PC-9 (cell line): ENCODE measurements at regions of chr11 and their contacts with region 1.

Region 1: GRCh38 chr11:75328426-75329277 is 22.8 kb downstream of the ARRB1 start:
- DNase-seq: peak; percentile 83 to 92
- H3K4me3 ChIP-seq: no peak overlapping the region
- H3K27ac ChIP-seq: 0 out of 2 replicates have a peak overlapping the region, but pooled peaks have one; percentile 20
- H3K4me1 ChIP-seq: peaks cover 31% of the 10 kb centered on the region
- H3K27me3 ChIP-seq: no peaks in the 10 kb centered on the region
- CTCF ChIP-seq: peak; percentile 85

Region 2: DNA sequence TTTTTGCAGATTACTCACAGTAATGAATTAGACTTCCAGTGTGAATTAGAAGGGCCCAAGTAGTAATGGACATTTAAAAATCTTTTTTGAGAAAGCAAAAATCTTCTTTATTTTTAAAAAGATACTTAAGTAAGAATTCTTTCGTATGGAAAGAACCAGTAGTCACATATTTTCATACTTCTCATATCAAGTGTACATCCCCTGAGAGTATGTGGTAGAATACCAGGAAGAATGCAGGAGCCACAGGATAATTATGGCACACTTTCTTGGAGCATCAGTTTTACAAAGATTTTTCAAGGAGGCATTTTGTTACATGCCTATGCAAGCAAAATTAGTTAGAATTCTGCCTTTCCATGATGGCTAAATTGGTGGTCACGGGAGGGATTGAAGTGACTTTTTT is 708.1 kb before region 1 on chr11:
- CTCF ChIA-PET with region 1: no interaction called
- POLR2A ChIA-PET with region 1: no interaction called
- intact Hi-C with region 1: no loop called
- DNase-seq: no peak
- H3K4me3 ChIP-seq: no peak overlapping the region
- H3K27ac ChIP-seq: no peak overlapping the region
- H3K4me1 ChIP-seq: no peaks in the 10 kb centered on the region
- H3K27me3 ChIP-seq: no peaks in the 10 kb centered on the region
- CTCF ChIP-seq: no peak

Region 3: GRCh38 chr11:75280227-75280701 is 48.4 kb before region 1 on chr11:
- CTCF ChIA-PET with region 1: interaction called, 3 read pairs
- POLR2A ChIA-PET with region 1: no interaction called
- intact Hi-C with region 1: loop called (anchors 1 kb)
- DNase-seq: peak; percentile 48 to 73
- H3K4me3 ChIP-seq: no peak overlapping the region
- H3K27ac ChIP-seq: no peak overlapping the region
- H3K4me1 ChIP-seq: no peaks in the 10 kb centered on the region
- H3K27me3 ChIP-seq: no peaks in the 10 kb centered on the region
- CTCF ChIP-seq: peak; percentile 98

Region 4: DNA sequence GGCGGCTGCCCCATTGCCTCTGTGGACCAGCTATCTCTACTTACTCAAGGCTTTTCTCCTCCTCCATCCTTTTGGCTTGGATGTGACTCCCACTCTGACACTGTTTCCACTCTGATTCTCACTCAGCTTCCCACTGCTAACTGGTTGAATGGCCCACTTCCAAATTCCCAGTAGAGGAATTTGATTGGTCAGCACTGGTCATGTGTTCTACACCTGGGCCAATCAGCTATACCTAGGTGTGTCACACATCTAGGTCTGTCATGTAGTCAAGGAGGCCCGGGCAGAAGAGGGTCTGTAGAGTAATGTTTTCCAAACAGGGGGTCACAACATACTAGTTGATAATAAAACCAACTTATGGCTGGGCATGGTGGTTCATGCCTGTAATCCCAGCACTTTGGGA is 34.7 kb before region 1 on chr11:
- CTCF ChIA-PET with region 1: no interaction called
- POLR2A ChIA-PET with region 1: no interaction called
- intact Hi-C with region 1: no loop called
- DNase-seq: no peak
- H3K4me3 ChIP-seq: no peak overlapping the region
- H3K27ac ChIP-seq: no peak overlapping the region
- H3K4me1 ChIP-seq: no peaks in the 10 kb centered on the region; the same call in 1 of the 2 replicates
- H3K27me3 ChIP-seq: no peaks in the 10 kb centered on the region
- CTCF ChIP-seq: no peak

Region 5: GRCh38 chr11:75342903-75343870 is 14.5 kb after region 1 on chr11:
- CTCF ChIA-PET with region 1: interaction called, 15 read pairs
- POLR2A ChIA-PET with region 1: interaction called, 3 read pairs
- intact Hi-C with region 1: no loop called
- DNase-seq: peak in 1 of 2 experiments; percentile 83
- H3K4me3 ChIP-seq: no peak overlapping the region
- H3K27ac ChIP-seq: no peak overlapping the region
- H3K4me1 ChIP-seq: peaks cover 93% of the 10 kb centered on the region
- H3K27me3 ChIP-seq: no peaks in the 10 kb centered on the region
- CTCF ChIP-seq: no peak

Region 6: DNA sequence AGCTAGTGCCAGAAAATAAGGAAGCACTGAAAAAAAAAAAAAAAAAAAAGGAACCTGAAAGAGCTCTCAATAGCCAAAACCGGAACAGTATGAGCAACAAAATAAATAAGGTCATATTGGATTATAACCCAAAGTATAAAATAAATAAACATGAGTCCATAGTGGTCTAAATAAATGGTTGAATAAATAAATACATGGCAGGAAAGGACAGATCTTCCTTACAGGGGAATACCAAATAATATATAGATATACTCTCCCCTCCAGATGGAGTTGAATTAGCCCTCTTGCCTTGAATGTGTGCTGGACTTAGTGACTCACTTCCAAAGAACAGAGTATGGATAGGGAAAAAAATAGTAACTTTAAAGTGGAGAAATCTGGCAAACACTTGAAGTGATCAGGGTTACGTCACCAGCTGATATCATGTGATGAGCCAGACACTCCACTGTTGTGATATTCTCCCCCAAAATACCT is 37.1 kb after region 1 on chr11:
- CTCF ChIA-PET with region 1: no interaction called
- POLR2A ChIA-PET with region 1: interaction called, 22 read pairs
- intact Hi-C with region 1: no loop called
- DNase-seq: no peak
- H3K4me3 ChIP-seq: no peak overlapping the region
- H3K27ac ChIP-seq: no peak overlapping the region
- H3K4me1 ChIP-seq: peaks cover 32% of the 10 kb centered on the region
- H3K27me3 ChIP-seq: no peaks in the 10 kb centered on the region
- CTCF ChIP-seq: no peak

Region 7: GRCh38 chr11:75371941-75372789 is 43.5 kb after region 1 on chr11:
- CTCF ChIA-PET with region 1: no interaction called
- POLR2A ChIA-PET with region 1: interaction called, 32 read pairs
- intact Hi-C with region 1: no loop called
- DNase-seq: peak; percentile 32 to 95
- H3K4me3 ChIP-seq: no peak overlapping the region
- H3K27ac ChIP-seq: peak overlapping the region; percentile 32
- H3K4me1 ChIP-seq: peaks cover 36% of the 10 kb centered on the region
- H3K27me3 ChIP-seq: no peaks in the 10 kb centered on the region
- CTCF ChIP-seq: no peak

Region 8: DNA sequence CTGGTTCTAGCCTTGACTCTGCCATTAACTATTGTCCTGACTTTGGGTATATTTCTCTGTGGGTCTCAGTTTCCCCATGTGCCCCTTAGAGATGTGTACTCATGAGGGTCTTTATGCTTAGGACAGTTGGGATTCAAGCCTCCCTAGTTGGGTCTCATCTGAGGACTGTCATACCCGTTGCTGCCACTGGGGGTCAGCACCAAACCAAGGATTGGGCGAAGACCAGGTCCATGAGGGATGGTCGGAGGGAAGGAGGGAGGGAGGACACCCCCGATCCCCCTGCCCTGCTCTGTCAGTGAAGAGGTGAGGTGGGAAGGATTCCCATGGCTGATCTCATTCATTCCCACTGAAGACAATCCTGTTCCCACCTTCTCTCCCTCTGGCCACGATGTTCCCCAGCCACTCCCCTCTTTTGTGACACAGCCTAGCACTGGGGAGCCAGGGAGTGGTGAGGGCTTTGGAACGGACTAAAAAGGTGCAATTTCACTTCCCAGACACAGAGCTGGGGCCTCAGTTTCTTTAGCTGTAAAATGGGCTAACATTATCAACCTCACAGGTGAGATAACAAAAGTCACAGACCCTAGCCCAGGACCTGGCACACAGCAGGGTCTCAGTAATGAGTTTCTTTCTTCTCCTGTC is 116.8 kb after region 1 on chr11:
- CTCF ChIA-PET with region 1: no interaction called
- POLR2A ChIA-PET with region 1: no interaction called
- intact Hi-C with region 1: loop called (anchors 5 kb)
- DNase-seq: peak in 1 of 2 experiments; percentile 74
- H3K4me3 ChIP-seq: no peak overlapping the region
- H3K27ac ChIP-seq: no peak overlapping the region
- H3K4me1 ChIP-seq: no peaks in the 10 kb centered on the region
- H3K27me3 ChIP-seq: no peaks in the 10 kb centered on the region; the same call in 1 of the 2 replicates
- CTCF ChIP-seq: peak; percentile 100

Region 9: GRCh38 chr11:75532200-75533048 is 203.8 kb after region 1 on chr11:
- CTCF ChIA-PET with region 1: no interaction called
- POLR2A ChIA-PET with region 1: no interaction called
- intact Hi-C with region 1: loop called (anchors 1 kb)
- DNase-seq: peak; percentile 72 to 76
- H3K4me3 ChIP-seq: no peak overlapping the region
- H3K27ac ChIP-seq: no peak overlapping the region
- H3K4me1 ChIP-seq: peaks cover 28% of the 10 kb centered on the region
- H3K27me3 ChIP-seq: no peaks in the 10 kb centered on the region
- CTCF ChIP-seq: peak; percentile 99

Region 10: DNA sequence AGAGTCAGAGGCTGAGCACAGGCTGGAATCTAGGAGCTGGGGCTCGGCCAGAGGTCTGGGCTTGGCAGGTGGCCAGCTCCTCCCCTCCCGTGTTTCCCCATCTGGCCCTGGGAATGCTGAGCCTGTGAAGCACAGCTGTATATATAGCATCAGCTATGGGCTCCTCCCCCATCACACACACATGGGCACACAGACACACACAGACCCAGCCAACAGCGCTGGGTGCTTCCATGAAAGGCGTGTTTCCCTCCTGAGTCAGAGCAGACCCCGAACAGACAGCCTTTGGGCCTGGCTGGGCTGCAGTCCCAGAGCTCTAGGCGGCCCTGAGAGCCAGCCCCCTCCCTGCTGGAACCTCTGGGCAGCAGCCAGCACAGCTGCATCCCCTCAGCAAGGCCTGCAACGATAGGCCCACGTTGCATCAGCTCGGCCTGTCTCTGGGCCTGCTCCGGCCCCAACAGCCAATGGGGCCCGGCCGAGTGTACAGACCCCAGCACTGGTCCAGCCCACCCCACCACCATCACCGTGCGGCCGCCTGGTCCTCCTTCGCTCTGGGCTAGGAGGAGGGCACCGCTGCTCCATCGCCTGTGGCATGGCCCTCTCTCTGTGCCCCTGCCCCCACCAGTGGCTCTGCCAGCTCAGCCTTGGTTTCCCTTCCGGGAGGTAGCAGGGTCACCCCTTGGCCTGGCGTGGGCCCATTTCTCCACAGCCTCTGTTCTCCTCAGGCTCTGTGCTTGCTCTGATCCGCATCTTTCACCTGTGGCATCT is 225.8 kb after region 1 on chr11:
- CTCF ChIA-PET with region 1: no interaction called
- POLR2A ChIA-PET with region 1: no interaction called
- intact Hi-C with region 1: no loop called
- DNase-seq: no peak
- H3K4me3 ChIP-seq: no peak overlapping the region
- H3K27ac ChIP-seq: no peak overlapping the region
- H3K4me1 ChIP-seq: peaks cover 10% of the 10 kb centered on the region
- H3K27me3 ChIP-seq: no peaks in the 10 kb centered on the region
- CTCF ChIP-seq: no peak